ENCODE measurements at regions of chr18 and their contacts with region 1.

Region 1: GRCh38 chr18:9147440-9148202 is 11.0 kb downstream of the ANKRD12 start:
- DNase-seq: peak; percentile 45
- H3K4me3 ChIP-seq: no peak overlapping the region
- H3K27ac ChIP-seq: no peak overlapping the region
- H3K4me1 ChIP-seq: no peaks in the 10 kb centered on the region
- H3K27me3 ChIP-seq: no peaks in the 10 kb centered on the region
- CTCF ChIP-seq: peak in 3 of 4 experiments; percentile 52 to 80 (median 78)
- POLR2A ChIP-seq: no peak

Region 2: DNA sequence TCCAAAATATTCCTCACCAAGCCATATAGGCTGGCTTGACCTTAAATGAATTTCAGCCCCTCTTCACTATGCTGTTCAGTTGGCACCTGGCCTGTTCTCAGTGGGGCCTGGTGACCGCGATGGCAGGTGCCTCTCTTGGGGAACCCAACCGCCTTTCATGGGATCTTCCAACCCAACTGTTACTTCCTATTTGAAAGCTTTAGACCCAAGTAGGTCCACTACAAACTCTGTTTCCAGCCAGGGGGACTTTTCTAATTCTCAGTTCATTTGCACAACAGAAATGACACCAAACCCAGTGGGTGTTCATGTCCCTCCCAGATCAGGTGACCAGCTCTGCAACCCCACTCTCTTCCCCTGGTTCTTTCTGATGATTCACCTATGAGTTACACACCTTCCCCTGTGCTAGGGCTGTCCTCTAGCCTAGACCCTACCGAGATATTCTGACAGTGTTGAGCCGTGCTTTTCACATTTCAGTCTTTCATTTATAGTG is 80.8 kb before region 1 on chr18:
- intact Hi-C with region 1: loop called (anchors 2 kb)
- DNase-seq: no peak
- H3K4me3 ChIP-seq: no peak overlapping the region
- H3K27ac ChIP-seq: no peak overlapping the region
- H3K4me1 ChIP-seq: no peaks in the 10 kb centered on the region
- H3K27me3 ChIP-seq: no peaks in the 10 kb centered on the region
- CTCF ChIP-seq: no peak
- POLR2A ChIP-seq: no peak

Region 3: DNA sequence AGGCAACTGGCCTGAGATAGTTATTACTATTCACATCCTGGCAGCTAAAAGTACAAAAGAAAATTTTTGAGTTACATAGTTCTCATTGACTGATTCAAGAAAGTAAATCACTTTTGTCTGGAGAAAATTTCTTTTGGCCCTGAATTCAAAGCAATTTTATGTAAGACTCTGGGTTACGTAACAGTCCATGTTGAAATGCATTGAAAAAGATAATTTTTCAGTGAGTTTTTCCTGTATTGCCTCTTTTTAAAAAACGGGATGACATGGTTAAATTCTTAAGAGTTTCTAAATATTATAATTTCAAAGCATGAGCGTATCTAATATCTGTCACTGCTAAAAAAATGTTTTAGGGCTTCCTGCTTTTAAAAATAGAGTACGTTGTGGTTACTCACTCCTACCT is 61.7 kb after region 1 on chr18:
- intact Hi-C with region 1: no loop called
- DNase-seq: no peak
- H3K4me3 ChIP-seq: no peak overlapping the region
- H3K27ac ChIP-seq: no peak overlapping the region
- H3K4me1 ChIP-seq: no peaks in the 10 kb centered on the region
- H3K27me3 ChIP-seq: no peaks in the 10 kb centered on the region
- CTCF ChIP-seq: no peak
- POLR2A ChIP-seq: no peak

Region 4: DNA sequence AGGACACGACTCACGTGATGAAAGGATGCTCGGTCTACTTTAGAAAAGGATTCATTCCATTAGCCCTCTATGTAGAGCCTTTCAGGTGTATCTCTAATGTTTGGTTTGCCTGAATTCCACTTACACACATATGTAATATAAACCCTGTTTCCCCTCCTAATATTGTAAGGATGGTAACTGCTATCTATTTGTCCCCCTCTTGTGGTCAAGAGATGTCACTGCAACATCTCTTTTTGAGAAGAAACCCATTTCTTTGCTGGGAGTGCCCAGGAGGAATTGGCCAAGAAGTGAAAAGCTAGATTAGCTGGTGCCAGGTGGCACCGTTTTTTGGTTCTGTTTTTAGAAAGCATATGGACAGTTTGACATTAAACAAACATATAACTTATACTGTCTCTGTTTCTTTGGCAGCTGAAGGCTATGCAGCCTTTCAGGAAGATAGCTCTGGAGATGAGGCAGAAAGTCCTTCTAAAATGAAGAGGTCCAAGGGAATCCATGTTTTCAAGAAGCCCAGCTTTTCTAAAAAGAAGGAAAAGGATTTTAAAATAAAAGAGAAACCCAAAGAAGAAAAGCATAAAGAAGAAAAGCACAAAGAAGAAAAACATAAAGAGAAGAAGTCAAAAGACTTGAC is 368.9 kb after region 1 on chr18:
- intact Hi-C with region 1: loop called (anchors 10 kb)
- DNase-seq: no peak
- H3K4me3 ChIP-seq: no peak overlapping the region
- H3K27ac ChIP-seq: no peak overlapping the region
- H3K4me1 ChIP-seq: no peaks in the 10 kb centered on the region
- H3K27me3 ChIP-seq: no peaks in the 10 kb centered on the region
- CTCF ChIP-seq: peak; percentile 70 to 78 (median 76)
- POLR2A ChIP-seq: no peak